ENCODE measurements at regions of chr5 and their contacts with region 1.

Region 1: DNA sequence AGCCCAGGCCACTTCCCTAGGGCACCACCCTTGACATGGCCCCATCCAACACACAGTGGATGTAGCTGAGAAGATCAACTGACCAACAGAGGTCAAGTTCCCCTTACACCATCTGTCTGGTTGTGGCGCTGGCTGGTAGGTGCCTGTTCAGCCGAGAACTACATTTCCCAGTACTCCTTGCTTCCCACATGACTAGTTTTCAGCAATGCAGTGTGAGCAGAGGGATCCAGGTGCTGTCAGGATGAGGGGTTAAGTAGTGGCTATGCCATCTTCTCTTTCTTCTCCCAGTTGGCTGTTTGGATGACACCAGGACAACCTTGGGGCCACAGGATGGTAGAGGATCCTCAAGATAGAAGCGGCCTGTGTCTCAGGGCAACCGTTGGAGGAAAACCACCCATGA is 48.6 kb upstream of the SH3PXD2B start:
- DNase-seq: peak in 1 of 4 donors; percentile 13
- ATAC-seq: no peak
- H3K4me3 ChIP-seq: no peak overlapping the region
- H3K27ac ChIP-seq: no peak overlapping the region
- H3K4me1 ChIP-seq: peaks cover 0 to 10% of the 10 kb centered on the region in 2 donors
- H3K27me3 ChIP-seq: no peaks in the 10 kb centered on the region
- CTCF ChIP-seq: no peak

Region 2: DNA sequence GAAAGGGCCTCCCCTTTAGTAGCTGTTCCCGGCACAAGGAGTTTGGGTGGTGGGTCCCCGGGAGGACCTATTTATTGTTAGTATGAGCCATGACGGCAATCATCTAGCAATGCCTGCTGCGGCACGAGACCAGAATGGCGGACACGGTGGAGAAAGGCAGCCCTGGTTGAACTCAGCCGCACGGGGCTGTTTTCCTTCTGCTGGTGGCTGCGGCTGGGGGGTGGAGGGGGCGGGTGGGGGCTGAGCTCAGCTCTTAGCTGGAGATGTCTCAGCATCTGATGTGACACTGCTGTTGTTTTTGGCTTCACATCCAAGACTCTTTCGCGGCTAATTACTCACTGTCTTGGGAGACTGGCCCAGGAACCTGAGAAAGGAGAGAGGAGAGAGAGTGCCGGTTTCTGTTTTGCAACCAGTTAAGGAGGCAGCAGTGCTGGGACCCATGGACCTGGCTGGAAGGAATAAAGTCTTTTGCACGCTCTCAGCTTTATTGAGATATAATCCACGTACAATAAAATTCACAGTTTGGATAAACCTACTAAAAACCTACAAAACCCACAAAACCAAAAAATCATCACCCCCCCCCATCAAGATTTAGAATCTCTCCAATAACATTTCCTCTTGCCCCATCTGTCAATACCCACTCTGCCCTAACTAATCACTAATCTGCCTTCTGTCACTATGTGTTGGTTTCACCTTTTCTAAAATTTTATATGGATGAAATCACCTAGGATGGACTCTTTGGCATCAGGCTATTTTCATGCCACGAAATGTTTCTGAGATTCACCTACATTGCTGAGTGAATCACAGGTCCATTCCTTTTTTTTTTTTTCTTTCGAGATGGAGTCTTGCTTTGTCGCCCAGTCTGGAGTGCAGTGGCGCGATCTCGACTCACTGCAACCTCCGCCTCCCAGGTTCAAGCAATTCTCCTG is 56.3 kb after region 1 on chr5:
- intact Hi-C with region 1: loop called in 1 of 2 experiments (anchors 10 kb)
- DNase-seq: peak in 3 of 4 donors; percentile 57 to 91 (median 87)
- ATAC-seq: peak; percentile 61
- H3K4me3 ChIP-seq: no peak overlapping the region
- H3K27ac ChIP-seq: peak overlapping the region in 1 of 2 donors; percentile 72
- H3K4me1 ChIP-seq: peaks cover 12 to 14% of the 10 kb centered on the region in 2 donors
- H3K27me3 ChIP-seq: no peaks in the 10 kb centered on the region
- CTCF ChIP-seq: no peak